Activated CD8-positive, alpha-beta T cell treated with anti-CD3 and anti-CD28 coated beads, Interleukin-2, amount 10 ng/mL, durations not matched to agents 7 days and 5 days (primary cell): ENCODE measurements at regions of chr6 and their contacts with region 1.

Region 1: GRCh38 chr6:15264902-15265761 is 19.3 kb downstream of the JARID2 start:
- DNase-seq: no peak
- ATAC-seq: peak; percentile 40
- H3K4me3 Mint-ChIP-seq: peak overlapping the region; percentile 42
- H3K27ac Mint-ChIP-seq: peak overlapping the region; percentile 61
- H3K4me1 Mint-ChIP-seq: peaks cover 84% of the 10 kb centered on the region
- H3K27me3 Mint-ChIP-seq: no peaks in the 10 kb centered on the region

Region 2: GRCh38 chr6:15254070-15254841 is 10.9 kb before region 1 on chr6:
- CTCF ChIA-PET with region 1: interaction called, 12 read pairs
- POLR2A ChIA-PET with region 1: interaction called, 13 read pairs
- DNase-seq: no peak
- ATAC-seq: no peak
- H3K4me3 Mint-ChIP-seq: no peak overlapping the region
- H3K27ac Mint-ChIP-seq: peak overlapping the region; percentile 80
- H3K4me1 Mint-ChIP-seq: peaks cover 98% of the 10 kb centered on the region
- H3K27me3 Mint-ChIP-seq: no peaks in the 10 kb centered on the region

Region 3: GRCh38 chr6:15331143-15331542 is 66.0 kb after region 1 on chr6:
- CTCF ChIA-PET with region 1: no interaction called
- POLR2A ChIA-PET with region 1: no interaction called
- DNase-seq: no peak
- ATAC-seq: peak; percentile 43
- H3K4me3 Mint-ChIP-seq: peak overlapping the region; percentile 60
- H3K27ac Mint-ChIP-seq: peak overlapping the region; percentile 82
- H3K4me1 Mint-ChIP-seq: peaks cover 80% of the 10 kb centered on the region
- H3K27me3 Mint-ChIP-seq: no peaks in the 10 kb centered on the region